Transverse colon (tissue), 4 donors: ENCODE measurements at regions of chr10 and their contacts with region 1.

Region 1: GRCh38 chr10:132452631-132453469 is 55.9 kb downstream of the PWWP2B start:
- DNase-seq: peak; percentile 95
- H3K4me3 ChIP-seq: peak overlapping the region in 2 of 4 donors; percentile 16 to 21
- H3K27ac ChIP-seq: peak overlapping the region; percentile 66 to 85 (median 76)
- H3K4me1 ChIP-seq: peaks cover 34 to 68% (median 55%) of the 10 kb centered on the region in 4 donors
- H3K27me3 ChIP-seq: no peaks in the 10 kb centered on the region
- CTCF ChIP-seq: peak; percentile 96 to 99 (median 99)
- EP300 ChIP-seq: peak; percentile 60
- POLR2A ChIP-seq: peak; percentile 35

Region 2: DNA sequence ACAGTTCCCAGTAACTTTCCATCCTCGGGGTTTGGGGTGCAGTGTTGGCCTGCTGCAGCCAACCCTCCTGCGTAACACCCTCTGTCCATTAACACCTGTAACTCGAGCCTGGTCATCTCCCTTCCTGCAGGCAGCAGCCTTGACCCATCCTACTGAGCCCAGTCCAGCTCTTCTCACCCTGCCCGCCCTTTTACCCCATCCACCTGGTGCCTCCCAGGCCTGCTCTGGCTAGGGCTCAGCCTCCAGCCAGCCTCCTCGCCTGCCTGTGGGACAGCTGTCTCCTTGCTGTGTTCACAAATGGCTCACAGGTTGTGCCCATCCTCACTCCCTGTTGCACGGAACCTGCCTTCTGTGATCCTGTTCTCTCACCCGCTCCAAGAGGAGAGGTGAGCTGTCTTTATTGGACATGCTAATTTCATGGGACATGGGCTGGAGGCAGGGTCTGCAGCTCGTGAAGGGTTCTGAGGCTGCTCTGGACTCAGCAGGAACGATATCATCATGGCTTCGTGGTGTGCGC is 864.1 kb before region 1 on chr10:
- in situ Hi-C with region 1: no loop called
- intact Hi-C with region 1: no loop called
- DNase-seq: no peak
- H3K4me3 ChIP-seq: no peak overlapping the region
- H3K27ac ChIP-seq: no peak overlapping the region
- H3K4me1 ChIP-seq: no peaks in the 10 kb centered on the region
- H3K27me3 ChIP-seq: no peaks in the 10 kb centered on the region
- CTCF ChIP-seq: no peak
- EP300 ChIP-seq: no peak
- POLR2A ChIP-seq: no peak

Region 3: GRCh38 chr10:132223156-132223590 is 229.7 kb before region 1 on chr10:
- in situ Hi-C with region 1: loop called in 3 of 4 experiments (anchors 10 to 25 kb)
- intact Hi-C with region 1: loop called (anchors 5 kb)
- DNase-seq: peak; percentile 80
- H3K4me3 ChIP-seq: no peak overlapping the region
- H3K27ac ChIP-seq: no peak overlapping the region
- H3K4me1 ChIP-seq: no peaks in the 10 kb centered on the region
- H3K27me3 ChIP-seq: no peaks in the 10 kb centered on the region
- CTCF ChIP-seq: peak; percentile 80 to 95 (median 90)
- EP300 ChIP-seq: no peak
- POLR2A ChIP-seq: no peak

Region 4: GRCh38 chr10:132229834-132230556 is 222.9 kb before region 1 on chr10:
- in situ Hi-C with region 1: loop called in 2 of 4 experiments (anchors 10 kb)
- intact Hi-C with region 1: loop called (anchors 5 kb)
- DNase-seq: peak; percentile 22
- H3K4me3 ChIP-seq: peak overlapping the region in 3 of 4 donors; percentile 6 to 32 (median 15)
- H3K27ac ChIP-seq: peak overlapping the region; percentile 14 to 63 (median 48)
- H3K4me1 ChIP-seq: peaks cover 0 to 14% (median 5%) of the 10 kb centered on the region in 4 donors
- H3K27me3 ChIP-seq: no peaks in the 10 kb centered on the region
- CTCF ChIP-seq: no peak
- EP300 ChIP-seq: no peak
- POLR2A ChIP-seq: no peak

Region 5: DNA sequence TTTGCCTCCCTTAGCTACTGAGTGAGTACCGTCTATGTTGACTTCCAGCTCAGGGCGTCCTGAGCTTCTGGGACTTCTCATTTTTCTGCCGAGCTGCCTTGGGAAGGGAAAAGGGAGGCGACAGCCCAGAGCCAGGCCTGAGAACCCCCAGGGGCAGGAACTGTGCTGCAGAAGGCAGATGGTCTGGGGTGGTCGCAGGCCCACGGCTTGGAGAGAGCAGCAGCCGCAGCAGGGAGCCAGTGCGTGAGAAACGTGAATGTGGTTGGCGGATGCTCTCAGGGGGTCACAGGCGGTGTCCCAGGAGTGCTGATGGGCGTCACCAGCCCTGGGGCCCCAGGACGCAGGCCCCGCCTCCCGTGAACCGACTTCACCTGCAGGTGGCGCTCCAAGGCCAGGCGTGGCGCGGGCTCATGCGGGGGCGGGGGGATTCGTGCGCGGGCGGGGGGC is 65.1 kb before region 1 on chr10:
- in situ Hi-C with region 1: loop called (anchors 5 kb)
- intact Hi-C with region 1: loop called (anchors 2 kb)
- DNase-seq: peak; percentile 84
- H3K4me3 ChIP-seq: peak overlapping the region in 1 of 4 donors; percentile 27
- H3K27ac ChIP-seq: peak overlapping the region in 3 of 4 donors; percentile 28 to 48 (median 39)
- H3K4me1 ChIP-seq: peaks cover 5 to 13% (median 11%) of the 10 kb centered on the region in 4 donors
- H3K27me3 ChIP-seq: no peaks in the 10 kb centered on the region
- CTCF ChIP-seq: peak; percentile 60 to 81 (median 66)
- EP300 ChIP-seq: no peak
- POLR2A ChIP-seq: no peak

Region 6: GRCh38 chr10:132396495-132397035 is 56.3 kb before region 1 on chr10:
- in situ Hi-C with region 1: loop called in 3 of 4 experiments (anchors 5 kb)
- intact Hi-C with region 1: loop called (anchors 2 kb)
- DNase-seq: peak; percentile 77
- H3K4me3 ChIP-seq: peak overlapping the region; percentile 19 to 72 (median 69)
- H3K27ac ChIP-seq: peak overlapping the region; percentile 88 to 98 (median 96)
- H3K4me1 ChIP-seq: peaks cover 26 to 57% (median 52%) of the 10 kb centered on the region in 4 donors
- H3K27me3 ChIP-seq: no peaks in the 10 kb centered on the region
- CTCF ChIP-seq: peak in 3 of 5 experiments; percentile 21 to 52 (median 32)
- EP300 ChIP-seq: no peak
- POLR2A ChIP-seq: no peak

Region 7: GRCh38 chr10:132536971-132537712 is 84.3 kb after region 1 on chr10:
- in situ Hi-C with region 1: loop called in 1 of 4 experiments (anchors 10 kb)
- intact Hi-C with region 1: no loop called
- DNase-seq: peak; percentile 100
- H3K4me3 ChIP-seq: peak overlapping the region; percentile 53 to 69 (median 64)
- H3K27ac ChIP-seq: peak overlapping the region; percentile 87 to 95 (median 92)
- H3K4me1 ChIP-seq: peaks cover 11 to 54% (median 47%) of the 10 kb centered on the region in 4 donors
- H3K27me3 ChIP-seq: no peaks in the 10 kb centered on the region
- CTCF ChIP-seq: peak in 2 of 5 experiments; percentile 19 to 20
- EP300 ChIP-seq: no peak
- POLR2A ChIP-seq: peak; percentile 41

Region 8: GRCh38 chr10:132637477-132638129 is 184.8 kb after region 1 on chr10:
- in situ Hi-C with region 1: loop called in 3 of 4 experiments (anchors 5 to 10 kb)
- intact Hi-C with region 1: loop called (anchors 1 kb)
- DNase-seq: no peak
- H3K4me3 ChIP-seq: no peak overlapping the region
- H3K27ac ChIP-seq: peak overlapping the region in 3 of 4 donors; percentile 6 to 35 (median 19)
- H3K4me1 ChIP-seq: peaks cover 15 to 53% (median 42%) of the 10 kb centered on the region in 4 donors
- H3K27me3 ChIP-seq: no peaks in the 10 kb centered on the region
- CTCF ChIP-seq: peak; percentile 60 to 86 (median 66)
- EP300 ChIP-seq: no peak
- POLR2A ChIP-seq: no peak